Breast epithelium (tissue), 4 donors: ENCODE measurements at regions of chr12 and their contacts with region 1.

Region 1: DNA sequence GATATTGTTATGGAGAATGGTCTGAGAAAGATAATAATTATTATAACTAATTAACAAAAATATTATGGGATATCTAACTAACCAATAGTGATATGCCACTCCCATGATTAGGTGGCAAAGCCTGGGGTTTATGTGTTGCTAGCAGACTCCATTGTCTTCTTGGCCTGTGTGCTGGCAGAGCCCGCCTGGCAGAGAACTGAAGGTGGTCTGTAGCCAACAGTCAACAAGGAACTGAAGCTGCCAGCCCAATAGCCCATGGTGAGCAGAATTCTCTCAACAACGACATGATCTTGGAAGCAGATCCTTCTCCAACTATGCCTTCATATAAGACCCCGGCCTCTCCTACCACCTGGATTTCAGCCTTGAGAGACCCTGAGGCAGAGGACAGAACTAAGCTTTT is 258.8 kb downstream of the SLC15A4 start:
- DNase-seq: no peak
- H3K4me3 ChIP-seq: no peak overlapping the region
- H3K27ac ChIP-seq: no peak overlapping the region
- H3K4me1 ChIP-seq: no peaks in the 10 kb centered on the region
- H3K27me3 ChIP-seq: no peaks in the 10 kb centered on the region
- CTCF ChIP-seq: no peak
- POLR2A ChIP-seq: no peak

Region 2: GRCh38 chr12:128684352-128684751 is 119.4 kb after region 1 on chr12:
- intact Hi-C with region 1: no loop called
- DNase-seq: no peak
- H3K4me3 ChIP-seq: no peak overlapping the region
- H3K27ac ChIP-seq: no peak overlapping the region
- H3K4me1 ChIP-seq: no peaks in the 10 kb centered on the region
- H3K27me3 ChIP-seq: no peaks in the 10 kb centered on the region
- CTCF ChIP-seq: no peak
- POLR2A ChIP-seq: no peak

Region 3: GRCh38 chr12:129753586-129753985 is 1188.6 kb after region 1 on chr12:
- intact Hi-C with region 1: loop called (anchors 10 kb)
- DNase-seq: no peak
- H3K4me3 ChIP-seq: no peak overlapping the region
- H3K27ac ChIP-seq: no peak overlapping the region
- H3K4me1 ChIP-seq: no peaks in the 10 kb centered on the region
- H3K27me3 ChIP-seq: no peaks in the 10 kb centered on the region
- CTCF ChIP-seq: no peak
- POLR2A ChIP-seq: no peak